Naive thymus-derived CD4-positive, alpha-beta T cell (primary cell): ENCODE measurements at regions of chr11 and their contacts with region 1.

Region 1: DNA sequence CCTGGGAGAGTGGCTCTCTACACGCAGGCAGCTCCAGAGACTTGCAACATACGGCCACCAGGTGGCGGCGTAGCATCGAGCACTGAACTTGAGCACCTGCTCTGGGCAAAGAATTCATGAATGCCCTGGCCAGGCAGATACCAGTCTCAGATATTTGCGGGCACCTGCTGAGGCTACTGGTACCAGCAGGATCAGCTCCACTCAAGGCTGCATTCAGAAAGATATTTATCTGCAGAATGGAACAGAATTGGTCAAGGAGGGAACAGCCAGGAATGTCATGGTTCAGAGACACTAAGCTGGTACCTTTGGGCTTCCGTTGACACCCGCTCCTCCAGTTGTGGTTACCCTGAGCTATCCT is 10.8 kb upstream of the CCDC86 start:
- DNase-seq: peak; percentile 60 to 82 (median 72)
- ATAC-seq: peak; percentile 89
- H3K4me3 ChIP-seq: no peak overlapping the region
- H3K4me3 Mint-ChIP-seq: peak overlapping the region in 4 of 10 donors; percentile 27 to 77 (median 74)
- H3K27ac ChIP-seq: no peak overlapping the region
- H3K27ac Mint-ChIP-seq: peak overlapping the region in 3 of 9 donors; percentile 32 to 81 (median 40)
- H3K4me1 ChIP-seq: no peaks in the 10 kb centered on the region
- H3K4me1 Mint-ChIP-seq: peaks cover 0 to 10% (median 0%) of the 10 kb centered on the region in 7 donors
- H3K27me3 ChIP-seq: no peaks in the 10 kb centered on the region
- H3K27me3 Mint-ChIP-seq: peaks cover 0 to 15% (median 4%) of the 10 kb centered on the region in 5 donors

Region 2: GRCh38 chr11:60841797-60842667 is 10.9 kb after region 1 on chr11 and contains the start of gene CCDC86:
- CTCF ChIA-PET with region 1: interaction called, 10 read pairs
- POLR2A ChIA-PET with region 1: no interaction called
- intact Hi-C with region 1: loop called in 1 of 2 experiments (anchors 1 kb)
- DNase-seq: peak; percentile 96 to 100 (median 99)
- ATAC-seq: peak; percentile 99
- H3K4me3 ChIP-seq: peak within 1 kb of the TSS; percentile 93
- H3K4me3 Mint-ChIP-seq: peak within 1 kb of the TSS; percentile 89 to 95 (median 91)
- H3K27ac ChIP-seq: peak within 1 kb of the TSS; percentile 78
- H3K27ac Mint-ChIP-seq: peak within 1 kb of the TSS; percentile 87 to 99 (median 95)
- H3K4me1 ChIP-seq: peaks cover 26 to 35% of the 10 kb centered on the region in 2 donors
- H3K4me1 Mint-ChIP-seq: peaks cover 31 to 49% (median 44%) of the 10 kb centered on the region in 7 donors
- H3K27me3 ChIP-seq: no peaks in the 10 kb centered on the region
- H3K27me3 Mint-ChIP-seq: peaks cover 0 to 2% (median 0%) of the 10 kb centered on the region in 5 donors
- total RNA-seq, gene CCDC86: 9.1 to 26.2 (median 11.6) TPM

Region 3: GRCh38 chr11:60899046-60899936 is 68.2 kb after region 1 on chr11:
- CTCF ChIA-PET with region 1: interaction called, 16 read pairs
- POLR2A ChIA-PET with region 1: no interaction called
- intact Hi-C with region 1: loop called (anchors 1 kb)
- DNase-seq: peak in 7 of 9 donors; percentile 11 to 56 (median 37)
- ATAC-seq: peak; percentile 95
- H3K4me3 ChIP-seq: no peak overlapping the region
- H3K4me3 Mint-ChIP-seq: no peak overlapping the region
- H3K27ac ChIP-seq: no peak overlapping the region
- H3K27ac Mint-ChIP-seq: peak overlapping the region in 3 of 9 donors; percentile 16 to 51 (median 38)
- H3K4me1 ChIP-seq: peaks cover 0 to 3% of the 10 kb centered on the region in 2 donors
- H3K4me1 Mint-ChIP-seq: peaks cover 10 to 25% (median 20%) of the 10 kb centered on the region in 7 donors
- H3K27me3 ChIP-seq: no peaks in the 10 kb centered on the region
- H3K27me3 Mint-ChIP-seq: no peaks in the 10 kb centered on the region

Region 4: DNA sequence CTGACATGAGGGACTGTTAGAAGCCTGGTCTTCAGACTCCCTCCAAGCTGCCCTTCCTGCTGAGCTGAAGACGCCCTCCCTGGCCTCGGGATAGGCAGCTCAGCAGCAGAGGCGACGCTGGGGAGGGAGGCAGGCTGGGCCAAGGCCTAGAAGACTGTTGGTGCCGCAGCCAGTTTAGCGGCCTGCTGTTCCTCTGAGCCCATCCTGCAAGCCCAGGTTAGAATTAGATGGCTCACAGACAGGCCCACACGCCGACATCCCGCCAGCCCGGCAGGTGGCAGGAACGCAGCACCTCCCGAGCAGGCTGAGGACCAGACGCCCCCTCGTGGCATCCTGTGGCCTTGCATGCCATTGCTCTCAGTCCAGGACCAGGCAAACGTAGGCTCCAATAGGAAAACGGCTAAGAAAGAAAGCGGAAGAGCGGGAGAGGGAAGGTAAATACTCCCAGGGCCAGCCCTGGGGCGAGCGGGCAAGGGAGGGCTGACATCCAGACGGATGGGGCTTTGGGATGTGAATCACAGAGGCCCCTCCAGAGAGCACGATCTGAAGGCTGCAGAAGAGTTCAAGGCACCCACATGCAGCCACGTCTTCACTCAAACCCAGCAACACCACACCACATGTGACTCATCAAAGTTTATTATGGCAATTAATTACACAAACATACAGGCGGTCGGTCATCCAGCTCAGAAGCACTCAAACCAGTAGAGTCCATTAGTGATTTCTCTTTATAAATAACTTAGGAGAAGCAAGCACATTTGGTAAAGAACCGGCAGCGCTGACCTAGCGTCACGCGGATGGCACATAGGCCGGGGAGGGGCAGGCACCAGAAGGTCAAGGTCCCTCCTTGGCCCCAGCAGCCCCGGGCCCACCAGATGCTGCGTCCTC is 298.8 kb after region 1 on chr11:
- CTCF ChIA-PET with region 1: interaction called, 4 read pairs
- POLR2A ChIA-PET with region 1: no interaction called
- intact Hi-C with region 1: loop called (anchors 1 to 5 kb)
- DNase-seq: peak; percentile 82 to 94 (median 88)
- ATAC-seq: peak; percentile 96
- H3K4me3 ChIP-seq: no peak overlapping the region
- H3K4me3 Mint-ChIP-seq: peak overlapping the region; percentile 15 to 77 (median 54)
- H3K27ac ChIP-seq: peak overlapping the region; percentile 57
- H3K27ac Mint-ChIP-seq: peak overlapping the region; percentile 4 to 87 (median 72)
- H3K4me1 ChIP-seq: peaks cover 4 to 18% of the 10 kb centered on the region in 2 donors
- H3K4me1 Mint-ChIP-seq: peaks cover 10 to 29% (median 23%) of the 10 kb centered on the region in 7 donors
- H3K27me3 ChIP-seq: no peaks in the 10 kb centered on the region
- H3K27me3 Mint-ChIP-seq: no peaks in the 10 kb centered on the region

Region 5: GRCh38 chr11:61294717-61295595 is 463.8 kb after region 1 on chr11 and contains the start of gene VWCE:
- CTCF ChIA-PET with region 1: no interaction called
- POLR2A ChIA-PET with region 1: no interaction called
- intact Hi-C with region 1: loop called in 1 of 2 experiments (anchors 2 kb)
- DNase-seq: peak; percentile 35 to 78 (median 57)
- ATAC-seq: peak; percentile 92
- H3K4me3 ChIP-seq: peak within 1 kb of the TSS; percentile 73
- H3K4me3 Mint-ChIP-seq: peak within 1 kb of the TSS; percentile 72 to 86 (median 80)
- H3K27ac ChIP-seq: no peak within 1 kb of the TSS
- H3K27ac Mint-ChIP-seq: peak within 1 kb of the TSS in 1 of 9 donors; percentile 46
- H3K4me1 ChIP-seq: no peaks in the 10 kb centered on the region
- H3K4me1 Mint-ChIP-seq: peaks cover 15 to 40% (median 39%) of the 10 kb centered on the region in 7 donors
- H3K27me3 ChIP-seq: no peaks in the 10 kb centered on the region
- H3K27me3 Mint-ChIP-seq: peaks cover 0 to 25% (median 9%) of the 10 kb centered on the region in 5 donors
- total RNA-seq, gene VWCE: 0.16 to 3.8 (median 0.49) TPM

Region 6: GRCh38 chr11:61392981-61393595 is 562.0 kb after region 1 on chr11:
- CTCF ChIA-PET with region 1: no interaction called
- POLR2A ChIA-PET with region 1: interaction called, 3 read pairs
- intact Hi-C with region 1: loop called in 1 of 2 experiments (anchors 2 kb)
- DNase-seq: peak in 7 of 9 donors; percentile 23 to 45 (median 37)
- ATAC-seq: peak; percentile 59
- H3K4me3 ChIP-seq: peak overlapping the region; percentile 84
- H3K4me3 Mint-ChIP-seq: peak overlapping the region; percentile 90 to 99 (median 94)
- H3K27ac ChIP-seq: peak overlapping the region; percentile 87
- H3K27ac Mint-ChIP-seq: peak overlapping the region; percentile 93 to 98 (median 97)
- H3K4me1 ChIP-seq: peaks cover 9 to 10% of the 10 kb centered on the region in 2 donors
- H3K4me1 Mint-ChIP-seq: peaks cover 9 to 25% (median 21%) of the 10 kb centered on the region in 7 donors
- H3K27me3 ChIP-seq: no peaks in the 10 kb centered on the region
- H3K27me3 Mint-ChIP-seq: no peaks in the 10 kb centered on the region